HEK293T (cell line): ENCODE measurements at regions of chr3 and their contacts with region 1.

Region 1: DNA sequence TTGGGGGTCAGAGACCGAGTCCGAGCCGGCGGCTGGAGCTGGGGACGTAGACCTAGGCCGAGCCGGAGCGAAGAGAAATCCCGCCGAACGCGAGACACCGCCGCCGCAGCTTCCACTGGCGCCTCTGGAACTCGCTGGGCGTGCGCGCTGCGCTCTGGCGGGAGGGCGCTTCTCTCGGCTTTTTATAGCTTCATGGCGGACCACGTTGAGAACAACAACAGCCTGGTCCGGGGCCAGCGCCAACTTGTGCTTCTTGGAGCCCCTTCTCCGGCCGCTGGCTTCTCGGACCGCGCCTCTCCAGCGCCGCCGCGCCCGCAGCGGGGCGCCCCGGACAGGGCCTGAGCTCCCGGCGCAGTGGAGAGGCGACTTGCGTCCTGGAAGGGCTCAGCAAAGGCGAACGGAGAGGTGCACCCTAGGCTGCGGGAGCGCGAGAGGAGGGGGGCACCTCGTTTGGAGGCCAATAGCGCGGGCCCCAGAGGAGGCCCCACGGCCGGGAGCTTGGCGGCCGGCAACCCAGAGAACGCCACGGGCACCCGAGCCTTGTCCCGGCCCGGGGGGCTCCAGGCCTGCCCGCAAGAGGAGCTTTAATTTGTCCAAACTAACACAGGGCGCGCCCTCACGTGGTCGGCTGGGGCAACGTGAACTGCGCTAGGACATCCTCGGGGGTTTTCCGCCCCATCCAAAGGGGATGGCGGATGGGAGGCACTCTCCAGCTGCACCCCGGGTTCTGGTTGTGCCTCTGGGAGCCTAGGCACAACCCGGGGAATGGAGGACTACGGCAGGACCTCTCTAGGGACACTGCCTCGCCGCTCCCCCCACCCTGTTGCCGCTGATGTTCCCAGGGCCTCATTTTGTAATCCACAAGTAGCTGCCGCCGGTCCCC is 37.7 kb downstream of the HMCES start:
- DNase-seq: peak; percentile 85

Region 2: GRCh38 chr3:129278439-129278970 is 37.9 kb before region 1 on chr3 and contains the start of gene HMCES:
- CTCF ChIA-PET with region 1: interaction called, 6 read pairs
- POLR2A ChIA-PET with region 1: interaction called, 60 read pairs
- DNase-seq: peak; percentile 95

Region 3: DNA sequence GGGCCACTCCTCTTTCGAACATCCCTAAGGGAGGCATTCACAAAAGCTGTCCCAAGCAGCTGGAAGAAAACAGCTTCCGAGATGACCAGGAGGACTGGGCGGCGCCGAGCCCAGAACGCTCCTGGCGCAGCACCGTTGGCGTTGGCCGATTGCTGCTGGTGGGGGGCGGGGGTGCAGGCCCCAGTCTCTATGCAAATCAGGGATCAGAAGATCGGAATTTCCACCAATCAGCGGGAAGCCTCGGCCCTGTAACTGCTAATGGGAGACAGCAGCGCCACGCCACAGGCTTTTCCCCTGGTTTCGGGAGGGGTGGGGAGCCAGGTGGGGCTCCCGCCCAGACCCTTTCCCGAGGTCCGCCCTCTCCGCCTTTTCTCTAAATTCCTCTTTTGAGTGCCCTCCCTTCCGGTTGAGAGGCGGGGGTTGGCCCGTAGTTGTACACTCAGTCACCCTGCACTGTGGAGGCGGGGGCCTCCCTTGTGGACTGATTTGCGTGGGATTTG is 10.7 kb before region 1 on chr3:
- CTCF ChIA-PET with region 1: interaction called, 3 read pairs
- POLR2A ChIA-PET with region 1: interaction called, 11 read pairs
- DNase-seq: no peak

Region 4: GRCh38 chr3:129330409-129330808 is 14.0 kb after region 1 on chr3:
- CTCF ChIA-PET with region 1: interaction called, 13 read pairs
- POLR2A ChIA-PET with region 1: interaction called, 11 read pairs
- DNase-seq: no peak